Ovary (tissue), 10 donors: ENCODE measurements at regions of chr1 and their contacts with region 1.

Region 1: GRCh38 chr1:23916209-23917131 is 3.3 kb upstream of the CNR2 start:
- DNase-seq: peak; percentile 49 to 62 (median 61)
- H3K4me3 ChIP-seq: no peak overlapping the region
- H3K27ac ChIP-seq: no peak overlapping the region
- H3K4me1 ChIP-seq: peaks cover 2% of the 10 kb centered on the region
- H3K27me3 ChIP-seq: no peaks in the 10 kb centered on the region
- CTCF ChIP-seq: peak; percentile 16 to 22 (median 19)
- EP300 ChIP-seq: no peak
- POLR2A ChIP-seq: no peak

Region 2: GRCh38 chr1:23768733-23769132 is 147.7 kb before region 1 on chr1:
- intact Hi-C with region 1: loop called in 1 of 4 experiments (anchors 5 kb)
- DNase-seq: no peak
- H3K4me3 ChIP-seq: no peak overlapping the region
- H3K27ac ChIP-seq: no peak overlapping the region
- H3K4me1 ChIP-seq: no peaks in the 10 kb centered on the region
- H3K27me3 ChIP-seq: no peaks in the 10 kb centered on the region
- CTCF ChIP-seq: no peak
- EP300 ChIP-seq: no peak
- POLR2A ChIP-seq: no peak

Region 3: GRCh38 chr1:24045766-24046165 is 129.3 kb after region 1 on chr1:
- intact Hi-C with region 1: no loop called
- DNase-seq: no peak
- H3K4me3 ChIP-seq: no peak overlapping the region
- H3K27ac ChIP-seq: peak overlapping the region; percentile 20 to 42
- H3K4me1 ChIP-seq: peaks cover 6% of the 10 kb centered on the region
- H3K27me3 ChIP-seq: no peaks in the 10 kb centered on the region
- CTCF ChIP-seq: no peak
- EP300 ChIP-seq: no peak
- POLR2A ChIP-seq: no peak